ENCODE measurements at regions of chrX and their contacts with region 1.

Region 1: GRCh38 chrX:41027431-41027831 is 57.8 kb upstream of the USP9X start:
- DNase-seq: peak; percentile 67
- H3K4me3 ChIP-seq: no peak overlapping the region
- H3K27ac ChIP-seq: peak overlapping the region; percentile 3
- H3K4me1 ChIP-seq: peaks cover 9% of the 10 kb centered on the region
- H3K27me3 ChIP-seq: no peaks in the 10 kb centered on the region
- CTCF ChIP-seq: no peak

Region 2: DNA sequence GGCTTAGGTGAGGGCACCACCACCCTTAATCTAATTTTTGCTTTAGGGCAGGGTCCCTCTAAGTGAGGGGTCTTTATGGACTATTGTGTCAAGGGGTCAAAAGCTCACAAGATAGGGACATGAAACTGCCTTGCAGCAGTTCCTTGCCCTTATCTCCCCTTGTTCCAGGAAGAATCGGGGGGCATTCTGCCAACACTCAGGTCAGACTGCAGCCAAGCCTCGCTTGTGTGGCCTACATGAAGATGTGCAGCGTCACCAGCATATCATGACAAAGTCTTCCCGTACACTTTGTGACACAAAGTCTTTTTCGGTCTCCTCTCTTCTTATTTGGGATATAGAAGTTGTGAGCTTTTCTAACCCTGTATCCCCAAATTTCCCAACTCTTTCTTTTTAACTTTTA is 40.3 kb after region 1 on chrX:
- CTCF ChIA-PET with region 1: no interaction called
- dilution Hi-C with region 1: loop called (anchors 5 kb)
- in situ Hi-C with region 1: no loop called
- intact Hi-C with region 1: no loop called
- DNase-seq: no peak
- H3K4me3 ChIP-seq: no peak overlapping the region
- H3K27ac ChIP-seq: no peak overlapping the region
- H3K4me1 ChIP-seq: no peaks in the 10 kb centered on the region
- H3K27me3 ChIP-seq: no peaks in the 10 kb centered on the region
- CTCF ChIP-seq: no peak